ENCODE measurements at regions of chr13 and their contacts with region 1.

Region 1: DNA sequence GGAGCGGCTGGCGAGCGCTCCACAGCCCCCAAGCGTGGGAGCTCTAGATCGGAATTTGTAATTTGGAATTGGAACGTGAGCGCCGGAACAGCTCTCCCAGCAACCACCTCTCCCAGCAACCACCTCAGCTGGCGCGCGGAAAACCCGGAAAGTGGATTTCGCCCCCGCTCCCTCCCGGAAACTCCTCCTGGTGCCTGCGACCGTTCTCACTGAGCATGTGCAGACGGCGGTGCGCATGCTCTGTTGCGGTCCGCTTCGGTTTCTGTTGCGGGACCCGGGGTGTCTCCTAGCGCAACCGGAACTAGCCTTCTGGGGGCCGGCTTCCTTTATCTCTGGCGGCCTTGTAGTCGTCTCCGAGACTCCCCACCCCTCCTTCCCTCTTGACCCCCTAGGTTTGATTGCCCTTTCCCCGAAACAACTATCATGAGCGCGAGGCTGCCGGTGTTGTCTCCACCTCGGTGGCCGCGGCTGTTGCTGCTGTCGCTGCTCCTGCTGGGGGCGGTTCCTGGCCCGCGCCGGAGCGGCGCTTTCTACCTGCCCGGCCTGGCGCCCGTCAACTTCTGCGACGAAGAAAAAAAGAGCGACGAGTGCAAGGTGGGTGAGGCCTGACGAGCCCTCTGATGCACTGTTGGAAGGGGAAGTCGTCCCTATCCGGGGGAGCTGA is at the start of gene TM9SF2:
- DNase-seq: peak; percentile 97
- H3K4me3 Mint-ChIP-seq: peak within 1 kb of the TSS; percentile 89
- H3K27ac Mint-ChIP-seq: peak within 1 kb of the TSS; percentile 86
- H3K4me1 Mint-ChIP-seq: peaks cover 56% of the 10 kb centered on the region
- H3K27me3 Mint-ChIP-seq: no peaks in the 10 kb centered on the region
- total RNA-seq, gene TM9SF2: 77.5 and 78.5 TPM in 2 replicates

Region 2: GRCh38 chr13:99087096-99087953 is 414.0 kb before region 1 on chr13:
- intact Hi-C with region 1: loop called (anchors 5 kb)
- DNase-seq: peak; percentile 91
- H3K4me3 Mint-ChIP-seq: peak overlapping the region; percentile 92
- H3K27ac Mint-ChIP-seq: peak overlapping the region; percentile 93
- H3K4me1 Mint-ChIP-seq: peaks cover 33% of the 10 kb centered on the region
- H3K27me3 Mint-ChIP-seq: no peaks in the 10 kb centered on the region

Region 3: DNA sequence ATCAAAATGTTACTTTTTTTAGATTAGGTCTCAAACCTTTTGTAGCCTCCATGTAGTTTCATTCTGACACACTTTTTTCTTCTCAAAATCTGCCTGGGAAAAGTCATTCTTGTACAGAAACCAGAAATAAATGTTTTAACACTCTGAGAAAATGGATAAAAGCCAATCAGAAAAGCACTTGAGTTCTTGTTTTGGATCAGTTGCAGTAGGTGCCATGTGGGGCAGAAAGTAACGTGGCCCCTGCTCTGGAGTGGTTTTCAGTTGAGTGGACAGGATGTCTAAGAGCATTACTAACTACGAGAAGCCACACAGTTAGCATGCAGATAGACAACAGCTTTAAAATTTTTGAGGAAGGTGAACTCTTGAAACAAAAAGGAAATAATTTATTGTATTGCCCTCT is 213.2 kb before region 1 on chr13:
- intact Hi-C with region 1: loop called (anchors 5 kb)
- DNase-seq: peak; percentile 38
- H3K4me3 Mint-ChIP-seq: peak overlapping the region; percentile 3
- H3K27ac Mint-ChIP-seq: peak overlapping the region; percentile 80
- H3K4me1 Mint-ChIP-seq: peaks cover 75% of the 10 kb centered on the region
- H3K27me3 Mint-ChIP-seq: no peaks in the 10 kb centered on the region

Region 4: DNA sequence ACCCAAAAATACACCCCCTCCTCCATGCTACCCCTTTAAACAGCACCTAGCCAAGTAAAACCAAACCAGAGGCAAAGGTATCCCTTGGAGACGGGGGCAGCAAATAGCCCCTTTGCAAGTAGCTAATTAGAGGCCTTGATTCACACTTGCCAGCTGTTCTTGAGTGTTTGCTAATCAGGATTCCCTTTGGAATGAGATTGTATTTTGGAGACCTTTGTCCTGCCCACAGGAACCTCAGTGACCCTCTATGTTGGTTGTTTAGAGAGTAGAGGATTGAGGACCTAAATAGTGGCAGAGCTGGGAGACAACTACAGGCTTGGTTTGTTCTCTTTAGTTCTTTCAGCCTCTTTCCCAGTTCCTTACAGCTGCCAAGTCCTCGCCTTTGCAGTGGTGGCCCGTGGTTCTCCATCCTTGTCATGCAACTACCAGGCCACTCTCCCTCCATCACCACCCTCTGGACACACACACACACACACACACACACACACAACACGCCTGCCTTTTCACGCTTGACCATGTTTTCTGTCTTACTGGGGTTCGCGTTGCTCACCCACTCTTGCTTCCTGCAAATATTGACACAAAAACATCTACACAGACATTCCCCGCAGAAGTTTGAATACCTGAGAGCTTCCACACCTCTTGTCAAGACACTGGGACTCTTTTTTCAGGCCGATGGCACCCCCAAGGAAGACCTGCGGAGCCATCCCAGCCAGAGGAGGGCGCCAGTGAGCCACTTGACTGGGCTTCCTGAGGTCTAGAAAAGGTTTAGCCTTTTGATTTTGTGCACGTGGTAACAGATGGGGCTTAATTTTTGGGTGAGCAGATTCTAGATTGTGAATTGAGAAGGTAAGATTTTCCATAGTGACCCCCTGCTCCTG is 114.2 kb before region 1 on chr13:
- intact Hi-C with region 1: loop called (anchors 5 kb)
- DNase-seq: peak; percentile 73
- H3K4me3 Mint-ChIP-seq: no peak overlapping the region
- H3K27ac Mint-ChIP-seq: peak overlapping the region; percentile 70
- H3K4me1 Mint-ChIP-seq: peaks cover 54% of the 10 kb centered on the region
- H3K27me3 Mint-ChIP-seq: no peaks in the 10 kb centered on the region

Region 5: DNA sequence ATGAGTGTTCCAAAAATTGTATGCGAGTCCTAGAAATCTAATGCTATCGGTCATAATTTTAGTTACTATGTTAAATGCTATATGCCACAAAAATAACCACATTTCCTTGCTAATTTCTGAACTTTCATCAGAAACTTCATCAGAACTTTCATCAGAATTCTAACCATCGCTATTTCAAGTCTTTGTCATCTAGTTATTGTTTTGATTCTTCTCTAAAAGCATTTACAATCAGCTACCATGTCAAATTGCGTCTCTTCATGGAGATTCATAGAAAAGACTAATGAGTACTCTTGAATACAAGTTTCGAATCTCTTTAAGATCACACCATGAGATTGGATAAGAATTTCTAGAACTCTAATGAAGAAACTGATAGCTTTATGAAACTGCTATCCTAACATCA is 52.8 kb before region 1 on chr13:
- intact Hi-C with region 1: loop called (anchors 2 kb)
- DNase-seq: no peak
- H3K4me3 Mint-ChIP-seq: no peak overlapping the region
- H3K27ac Mint-ChIP-seq: peak overlapping the region; percentile 52
- H3K4me1 Mint-ChIP-seq: peaks cover 41% of the 10 kb centered on the region
- H3K27me3 Mint-ChIP-seq: no peaks in the 10 kb centered on the region

Region 6: GRCh38 chr13:99916366-99917103 is 415.2 kb after region 1 on chr13:
- intact Hi-C with region 1: no loop called
- DNase-seq: no peak
- H3K4me3 Mint-ChIP-seq: no peak overlapping the region
- H3K27ac Mint-ChIP-seq: no peak overlapping the region
- H3K4me1 Mint-ChIP-seq: peaks cover 6% of the 10 kb centered on the region
- H3K27me3 Mint-ChIP-seq: peaks cover 39% of the 10 kb centered on the region